Prostate gland (tissue), 2 donors: ENCODE measurements at regions of chr10 and their contacts with region 1.

Region 1: DNA sequence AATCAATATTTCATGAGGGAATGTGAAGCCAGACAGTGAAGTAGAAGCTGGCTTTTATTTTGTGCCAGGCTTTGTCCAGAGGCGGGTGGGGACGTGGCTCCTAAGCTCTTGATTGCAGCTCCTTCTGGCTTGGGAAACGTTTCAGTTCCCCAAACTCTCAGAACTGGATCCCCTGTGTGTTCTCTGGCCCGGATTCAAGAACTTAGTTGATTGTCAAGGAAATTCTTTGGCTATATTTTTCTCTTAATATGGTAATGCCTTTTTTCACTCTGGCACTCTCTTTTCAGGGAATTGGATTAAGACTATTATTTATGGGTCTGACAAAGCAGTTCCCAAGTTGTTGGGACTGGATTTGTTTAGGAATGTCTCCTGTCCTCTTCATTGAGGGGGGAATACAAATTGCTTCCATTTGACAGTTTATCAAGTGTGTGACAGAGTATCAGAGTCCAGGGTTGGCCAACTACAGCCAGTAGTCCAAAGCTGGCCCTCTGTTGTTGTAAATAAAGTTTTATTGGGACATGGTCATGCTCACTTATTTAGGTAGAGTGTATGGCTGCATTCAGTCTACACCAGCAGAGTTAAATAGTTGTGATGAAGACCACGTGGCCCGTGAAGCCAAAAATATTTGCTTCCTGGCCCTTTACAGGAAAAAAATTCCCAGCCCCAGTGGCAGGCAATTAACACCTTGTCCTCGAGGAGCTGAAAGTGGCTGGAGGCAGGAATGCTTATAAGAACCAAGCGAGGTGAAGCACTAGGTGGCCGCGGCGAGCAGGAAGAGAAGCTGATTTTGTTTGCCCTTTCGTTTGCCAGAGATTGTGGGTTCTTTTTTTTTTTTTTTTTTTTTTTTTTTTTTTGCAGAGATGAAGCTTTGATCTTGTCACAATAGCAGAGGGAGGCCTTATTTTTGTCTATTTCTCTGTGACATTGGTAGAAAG is 34.3 kb downstream of the HTRA1 start:
- DNase-seq: peak; percentile 59
- H3K4me3 ChIP-seq: no peak overlapping the region
- H3K27ac ChIP-seq: peak overlapping the region; percentile 41 to 58
- H3K4me1 ChIP-seq: no peaks in the 10 kb centered on the region
- H3K27me3 ChIP-seq: no peaks in the 10 kb centered on the region
- CTCF ChIP-seq: no peak
- POLR2A ChIP-seq: no peak

Region 2: DNA sequence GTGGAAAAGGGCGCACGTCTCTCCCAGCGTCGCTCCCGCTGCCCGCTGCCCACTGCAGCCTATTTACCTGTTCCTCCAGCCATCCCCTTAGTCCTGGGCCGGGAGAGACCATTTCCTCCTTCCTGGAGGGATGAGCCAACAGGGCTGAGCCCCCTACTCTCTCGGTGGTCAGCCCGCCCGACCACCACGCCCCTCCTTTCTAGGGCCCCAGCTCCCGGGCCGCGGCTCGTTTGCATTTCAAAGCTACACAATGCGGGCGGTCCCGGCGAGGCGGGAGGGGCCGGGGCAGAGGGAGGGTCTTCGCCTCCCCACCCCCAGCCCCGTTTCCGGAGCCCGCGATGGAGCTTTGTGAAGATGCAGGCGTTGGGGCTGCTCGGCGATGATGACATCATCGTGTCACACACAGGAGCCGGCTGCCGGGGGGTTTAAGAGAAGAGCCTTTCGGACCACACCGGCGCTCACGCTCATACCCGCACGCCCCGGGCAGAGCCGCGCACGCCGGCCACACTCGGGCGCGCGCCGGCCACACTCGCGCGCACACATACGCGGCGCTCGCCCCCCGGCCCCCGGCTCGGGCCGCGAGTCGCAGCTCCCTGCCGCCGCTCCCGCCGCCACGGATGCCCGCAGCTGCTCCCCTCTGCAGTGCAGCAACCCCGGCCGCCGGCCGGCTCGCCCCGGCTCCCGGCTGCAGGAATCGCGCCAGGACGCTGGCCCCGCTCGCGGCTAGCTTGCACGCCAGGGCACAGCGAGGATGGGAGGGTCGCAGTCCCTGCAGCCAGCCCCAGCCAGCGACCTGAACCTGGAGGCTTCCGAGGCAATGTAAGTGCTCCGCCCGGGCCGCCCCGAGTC is 332.3 kb before region 1 on chr10:
- intact Hi-C with region 1: loop called (anchors 10 kb)
- DNase-seq: no peak
- H3K4me3 ChIP-seq: peak overlapping the region; percentile 22 to 28
- H3K27ac ChIP-seq: peak overlapping the region; percentile 41
- H3K4me1 ChIP-seq: peaks cover 8% of the 10 kb centered on the region
- H3K27me3 ChIP-seq: no peaks in the 10 kb centered on the region
- CTCF ChIP-seq: no peak
- POLR2A ChIP-seq: no peak

Region 3: DNA sequence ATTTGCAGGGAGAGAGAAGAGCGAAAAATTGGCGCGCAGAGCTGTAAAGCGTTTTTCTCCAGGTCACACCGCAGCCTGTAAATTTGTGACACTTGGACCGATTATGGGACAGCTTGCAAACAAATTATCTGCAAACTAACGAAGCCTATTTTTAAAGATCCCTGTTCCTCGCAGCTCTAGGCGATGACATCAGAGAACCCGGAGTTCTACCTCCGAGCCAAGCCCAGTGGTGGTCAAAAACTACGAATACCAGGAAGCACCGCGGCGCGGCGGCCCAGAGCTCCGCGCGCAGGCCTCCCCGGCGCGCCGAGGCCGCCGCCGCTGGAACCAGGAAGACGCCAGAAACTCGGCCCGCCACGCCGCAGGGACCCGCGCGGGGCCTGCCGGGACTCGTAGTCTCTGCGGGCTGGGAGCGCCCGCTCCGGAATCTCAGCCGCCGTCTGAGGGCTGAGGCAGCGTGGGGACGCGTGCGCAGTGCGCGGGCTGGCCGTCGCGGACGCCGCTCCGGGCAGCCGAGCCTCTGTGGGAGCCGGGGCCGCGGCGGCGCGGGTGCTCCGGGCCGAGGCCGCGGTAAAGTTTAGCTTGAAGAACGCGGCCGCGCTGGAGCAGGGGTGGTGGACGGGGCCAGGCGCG is 121.3 kb before region 1 on chr10 and contains the start of gene PLEKHA1:
- intact Hi-C with region 1: loop called (anchors 5 kb)
- DNase-seq: peak; percentile 94
- H3K4me3 ChIP-seq: peak within 1 kb of the TSS; percentile 91
- H3K27ac ChIP-seq: peak within 1 kb of the TSS; percentile 91 to 97
- H3K4me1 ChIP-seq: no peaks in the 10 kb centered on the region
- H3K27me3 ChIP-seq: no peaks in the 10 kb centered on the region
- CTCF ChIP-seq: peak in 2 of 4 experiments; percentile 27 to 50
- POLR2A ChIP-seq: peak; percentile 79
- total RNA-seq, gene PLEKHA1: 24.2 to 35.2 TPM

Region 4: DNA sequence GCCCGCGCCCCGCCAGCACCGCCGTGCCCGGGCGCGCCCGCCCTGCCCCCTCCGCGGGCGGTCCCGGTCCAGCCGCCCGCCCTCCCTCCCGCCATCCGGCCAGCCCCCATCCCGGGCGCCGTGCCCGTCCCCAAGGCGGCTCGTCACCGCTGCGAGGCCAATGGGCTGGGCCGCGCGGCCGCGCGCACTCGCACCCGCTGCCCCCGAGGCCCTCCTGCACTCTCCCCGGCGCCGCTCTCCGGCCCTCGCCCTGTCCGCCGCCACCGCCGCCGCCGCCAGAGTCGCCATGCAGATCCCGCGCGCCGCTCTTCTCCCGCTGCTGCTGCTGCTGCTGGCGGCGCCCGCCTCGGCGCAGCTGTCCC is 34.3 kb before region 1 on chr10 and contains the start of gene HTRA1:
- intact Hi-C with region 1: loop called (anchors 5 kb)
- DNase-seq: peak; percentile 64
- H3K4me3 ChIP-seq: peak within 1 kb of the TSS; percentile 51 to 55
- H3K27ac ChIP-seq: peak within 1 kb of the TSS; percentile 77 to 81
- H3K4me1 ChIP-seq: peaks cover 7% of the 10 kb centered on the region
- H3K27me3 ChIP-seq: no peaks in the 10 kb centered on the region
- CTCF ChIP-seq: no peak
- POLR2A ChIP-seq: no peak
- total RNA-seq, gene HTRA1: 41.4 to 61.8 TPM